ENCODE measurements at regions of chr14 and their contacts with region 1.

Region 1: DNA sequence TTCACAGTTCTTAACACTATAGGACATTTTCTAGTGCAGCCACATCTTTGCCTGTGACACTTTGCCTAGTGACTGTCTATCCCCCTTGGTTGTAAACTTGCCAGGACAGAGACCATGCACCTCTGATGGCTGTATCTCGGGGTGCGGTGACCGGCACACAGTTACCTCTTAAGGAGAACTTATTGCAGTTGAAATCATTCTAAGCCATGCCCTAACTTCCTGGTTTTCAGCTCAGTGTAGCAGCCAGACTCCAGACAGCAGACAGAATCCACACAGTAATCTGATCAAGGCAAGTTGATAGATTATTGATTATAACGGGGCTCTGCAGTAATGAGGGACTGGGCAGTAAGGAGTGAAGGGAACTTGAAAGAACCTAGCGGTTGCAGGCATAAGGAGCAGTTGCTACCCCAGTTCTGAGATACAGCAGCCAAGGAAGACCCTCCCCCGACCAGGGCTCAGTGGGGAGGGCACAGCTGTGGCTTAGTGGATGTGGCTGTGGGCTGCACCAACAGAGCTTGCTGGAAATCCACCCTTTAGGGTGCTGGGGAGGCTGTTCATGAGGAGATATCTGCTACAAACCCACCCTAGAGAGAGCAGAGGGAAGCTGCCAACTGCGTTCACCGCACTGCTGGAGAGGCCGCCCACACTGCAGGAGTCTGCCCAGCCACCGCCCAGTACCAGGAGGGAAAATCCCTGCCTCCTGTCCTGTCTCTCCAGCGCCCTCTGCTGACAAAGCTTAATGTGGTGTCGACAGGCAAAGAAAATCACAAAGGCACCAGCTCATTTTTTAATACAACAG is 58.2 kb upstream of the BEGAIN start:
- DNase-seq: peak; percentile 96
- ATAC-seq: peak; percentile 94
- H3K4me3 Mint-ChIP-seq: peak overlapping the region; percentile 50
- H3K27ac Mint-ChIP-seq: no peak overlapping the region
- H3K4me1 Mint-ChIP-seq: peaks cover 9% of the 10 kb centered on the region
- H3K27me3 Mint-ChIP-seq: peaks cover 6% of the 10 kb centered on the region
- CTCF ChIP-seq: peak; percentile 75

Region 2: DNA sequence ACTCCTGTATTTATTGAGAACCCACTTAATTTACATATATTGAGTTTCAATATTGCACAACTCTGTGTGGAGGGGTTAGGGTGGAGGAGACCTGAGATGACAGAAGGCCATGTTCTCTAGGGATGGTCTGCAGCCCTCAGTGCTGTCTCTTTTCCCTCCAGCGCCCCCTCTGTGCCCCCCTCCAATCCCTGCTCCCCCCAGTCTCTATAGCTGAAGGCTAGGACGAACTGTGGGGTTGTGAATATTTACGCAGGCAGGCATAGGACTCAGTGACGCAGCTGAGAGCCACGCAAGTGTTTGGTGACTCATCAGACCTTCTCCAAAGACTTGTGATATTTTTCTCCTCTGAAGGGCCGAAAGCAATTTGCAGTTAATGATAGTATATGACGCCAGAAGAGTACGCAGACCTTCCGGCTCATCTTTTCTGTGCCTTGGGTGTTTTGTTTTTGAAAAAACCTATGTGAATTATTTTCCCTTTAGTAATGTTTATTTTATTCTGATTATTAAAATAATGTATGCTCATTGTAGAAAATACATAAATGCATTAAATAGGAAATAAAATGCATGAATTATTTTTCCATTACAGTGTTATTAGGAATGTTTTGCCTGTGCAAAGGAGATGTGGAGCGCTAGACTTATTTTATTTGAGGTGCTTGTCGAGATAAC is 236.9 kb before region 1 on chr14:
- CTCF ChIA-PET with region 1: interaction called, 14 read pairs
- POLR2A ChIA-PET with region 1: no interaction called
- DNase-seq: no peak
- ATAC-seq: no peak
- H3K4me3 Mint-ChIP-seq: no peak overlapping the region
- H3K27ac Mint-ChIP-seq: no peak overlapping the region
- H3K4me1 Mint-ChIP-seq: peaks cover 41% of the 10 kb centered on the region
- H3K27me3 Mint-ChIP-seq: no peaks in the 10 kb centered on the region
- CTCF ChIP-seq: no peak

Region 3: GRCh38 chr14:100466111-100466856 is 179.1 kb before region 1 on chr14:
- CTCF ChIA-PET with region 1: interaction called, 12 read pairs
- POLR2A ChIA-PET with region 1: no interaction called
- DNase-seq: peak; percentile 61
- ATAC-seq: peak; percentile 85
- H3K4me3 Mint-ChIP-seq: peak overlapping the region; percentile 44; the same call in 1 of the 2 replicates
- H3K27ac Mint-ChIP-seq: peak overlapping the region; percentile 69
- H3K4me1 Mint-ChIP-seq: peaks cover 32% of the 10 kb centered on the region
- H3K27me3 Mint-ChIP-seq: peaks cover 10% of the 10 kb centered on the region
- CTCF ChIP-seq: no peak

Region 4: DNA sequence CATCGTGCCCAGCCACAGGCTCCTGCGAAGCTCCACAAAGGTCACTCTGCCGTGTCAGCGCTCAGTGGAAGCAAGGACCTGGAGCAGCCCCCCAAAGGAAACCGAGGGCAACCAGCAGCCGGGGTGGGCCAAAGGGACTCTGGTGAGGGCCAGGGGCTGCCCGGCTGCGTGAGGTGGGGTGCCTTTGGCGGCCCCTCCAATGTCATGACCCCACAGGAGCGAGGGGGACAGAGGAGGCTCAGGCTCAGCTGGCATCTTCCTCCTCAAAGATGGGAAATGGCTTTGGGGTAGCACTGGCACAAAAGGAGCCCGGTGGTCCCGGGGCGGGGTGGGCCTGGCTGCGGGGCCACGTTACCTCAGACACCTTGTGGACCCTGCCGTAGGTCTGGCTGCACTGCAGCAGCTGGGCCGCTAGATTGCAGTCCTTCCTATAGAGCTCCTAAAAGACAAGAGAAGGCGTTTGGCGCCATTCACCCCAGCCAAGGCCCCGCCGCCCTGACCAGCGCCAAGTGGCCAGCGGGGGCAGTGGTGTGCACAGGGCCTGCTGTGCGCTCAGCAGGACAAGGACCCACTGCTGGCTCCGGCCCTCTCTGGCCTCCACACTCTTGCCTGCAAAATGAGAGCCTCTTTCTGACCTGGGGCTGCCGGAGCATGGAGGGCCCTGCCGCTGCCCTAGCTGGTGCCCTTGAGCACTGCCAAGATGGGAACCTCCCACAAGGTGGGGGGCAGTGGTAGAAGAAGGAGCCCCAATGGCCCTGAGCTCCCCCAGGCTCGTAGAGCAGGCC is 105.1 kb before region 1 on chr14:
- CTCF ChIA-PET with region 1: interaction called, 56 read pairs
- POLR2A ChIA-PET with region 1: no interaction called
- DNase-seq: peak; percentile 63
- ATAC-seq: peak; percentile 72
- H3K4me3 Mint-ChIP-seq: no peak overlapping the region
- H3K27ac Mint-ChIP-seq: no peak overlapping the region
- H3K4me1 Mint-ChIP-seq: peaks cover 5% of the 10 kb centered on the region
- H3K27me3 Mint-ChIP-seq: no peaks in the 10 kb centered on the region; the same call in 1 of the 2 replicates
- CTCF ChIP-seq: peak; percentile 26; the same call in 1 of the 2 replicates

Region 5: DNA sequence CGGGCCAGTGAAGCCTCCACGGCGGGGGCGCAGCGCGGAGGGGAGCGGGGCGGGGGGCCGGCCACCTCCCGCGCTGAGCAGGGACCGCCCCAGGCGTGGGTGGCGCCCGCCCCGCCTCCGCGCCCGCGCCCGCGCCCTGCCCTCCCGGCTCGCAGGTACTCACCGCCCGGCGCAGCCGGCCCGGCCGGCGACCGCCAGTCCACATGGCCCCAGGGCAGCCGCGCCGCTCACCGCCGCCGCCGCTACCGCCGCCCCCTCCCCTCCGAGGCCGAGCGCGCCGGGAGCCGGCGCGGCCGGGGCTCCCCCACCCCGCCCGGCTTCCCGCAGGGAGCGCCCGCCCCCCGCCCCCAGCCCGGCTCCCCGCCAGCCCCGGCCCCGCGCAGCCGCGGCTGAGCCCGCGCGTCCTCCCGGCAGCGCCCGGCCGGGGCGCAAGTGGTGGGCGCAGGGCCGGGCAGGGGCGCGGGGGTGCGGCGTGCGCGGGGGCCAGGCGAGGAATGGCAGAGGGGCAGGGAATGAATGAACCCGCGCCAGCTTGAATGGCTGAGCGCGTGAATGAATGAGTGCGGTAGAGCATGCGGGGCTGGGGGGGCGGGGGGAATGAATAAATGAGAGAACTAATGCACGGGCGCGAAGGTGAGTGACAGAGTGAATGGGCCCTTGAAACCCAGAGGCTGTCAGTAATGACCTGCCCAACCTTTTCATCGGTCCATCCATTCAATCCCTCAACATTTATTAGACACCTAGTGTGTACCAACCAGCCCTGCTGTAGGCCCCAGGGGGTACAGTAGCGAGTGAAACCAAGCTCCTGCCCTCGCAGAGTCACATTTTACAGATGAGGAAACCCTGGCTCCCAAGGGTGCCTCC is 58.1 kb before region 1 on chr14 and contains the start of gene BEGAIN:
- CTCF ChIA-PET with region 1: interaction called, 16 read pairs
- POLR2A ChIA-PET with region 1: no interaction called
- DNase-seq: peak; percentile 36
- ATAC-seq: peak; percentile 47
- H3K4me3 Mint-ChIP-seq: peak within 1 kb of the TSS; percentile 64
- H3K27ac Mint-ChIP-seq: no peak within 1 kb of the TSS
- H3K4me1 Mint-ChIP-seq: peaks cover 3% of the 10 kb centered on the region; the same call in 1 of the 2 replicates
- H3K27me3 Mint-ChIP-seq: peaks cover 59% of the 10 kb centered on the region
- CTCF ChIP-seq: no peak
- total RNA-seq, gene BEGAIN: 1.3 to 1.8 TPM (median 1.3 TPM) in 3 replicates

Region 6: DNA sequence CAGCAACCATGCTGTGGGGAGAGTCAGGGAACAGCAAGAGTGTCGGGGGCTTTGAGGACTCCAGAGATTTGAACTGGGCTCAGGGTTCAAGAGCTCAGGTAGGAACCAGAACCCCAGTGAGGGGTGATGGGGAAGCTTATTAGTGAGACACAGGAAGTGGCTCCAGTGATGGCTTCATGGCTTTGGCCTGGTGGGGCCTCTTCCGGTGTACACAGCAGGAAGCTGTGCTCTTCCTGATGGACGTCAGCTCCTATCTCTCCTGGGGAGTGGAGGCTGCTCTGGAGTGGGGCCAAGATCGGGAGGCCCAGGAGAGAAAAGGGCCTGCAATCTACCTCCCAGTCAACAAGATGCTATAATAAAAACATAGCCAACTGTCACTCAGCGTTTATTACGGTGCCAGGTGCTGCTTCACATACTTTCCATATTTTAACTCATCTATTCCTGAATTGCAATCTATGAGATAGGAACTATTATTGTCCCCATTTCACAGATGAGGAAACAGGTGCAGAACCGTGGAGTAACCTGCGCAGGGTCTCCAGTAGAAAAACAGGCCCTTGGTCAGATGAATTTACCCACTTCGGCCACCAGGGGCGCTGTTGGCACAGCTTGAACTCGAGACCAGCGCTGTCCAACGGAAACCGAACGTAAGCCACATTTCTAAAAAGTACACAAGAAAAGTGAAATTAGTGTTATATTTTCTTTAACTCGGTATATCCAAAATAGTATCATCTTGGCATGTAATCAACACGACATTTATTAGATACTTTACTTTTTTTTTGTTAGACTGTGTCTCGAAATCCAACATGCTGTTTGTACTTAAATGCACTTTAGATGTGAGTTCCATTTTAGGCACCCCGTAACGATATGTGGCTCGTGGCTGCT is 17.7 kb after region 1 on chr14:
- CTCF ChIA-PET with region 1: interaction called, 68 read pairs
- POLR2A ChIA-PET with region 1: no interaction called
- DNase-seq: peak; percentile 76
- ATAC-seq: peak; percentile 22
- H3K4me3 Mint-ChIP-seq: no peak overlapping the region
- H3K27ac Mint-ChIP-seq: no peak overlapping the region
- H3K4me1 Mint-ChIP-seq: peaks cover 11% of the 10 kb centered on the region
- H3K27me3 Mint-ChIP-seq: no peaks in the 10 kb centered on the region
- CTCF ChIP-seq: peak; percentile 98

Measured in WTC11 (cell line).